ENCODE measurements at regions of chr1 and their contacts with region 1.

Region 1: GRCh38 chr1:60281360-60281932 is 207.9 kb upstream of the C1orf87 start:
- H3K4me3 ChIP-seq: no peak overlapping the region
- H3K27ac ChIP-seq: no peak overlapping the region
- H3K4me1 ChIP-seq: no peaks in the 10 kb centered on the region
- CTCF ChIP-seq: peak; percentile 57

Region 2: GRCh38 chr1:59971464-59971911 is 310.0 kb before region 1 on chr1:
- CTCF ChIA-PET with region 1: interaction called, 16 read pairs
- POLR2A ChIA-PET with region 1: no interaction called
- H3K4me3 ChIP-seq: no peak overlapping the region
- H3K27ac ChIP-seq: no peak overlapping the region
- H3K4me1 ChIP-seq: no peaks in the 10 kb centered on the region
- CTCF ChIP-seq: peak; percentile 89

Region 3: GRCh38 chr1:60073605-60074278 is 207.7 kb before region 1 on chr1 and contains the start of gene C1orf87:
- CTCF ChIA-PET with region 1: no interaction called
- POLR2A ChIA-PET with region 1: no interaction called
- H3K4me3 ChIP-seq: peak within 1 kb of the TSS; percentile 29
- H3K27ac ChIP-seq: no peak within 1 kb of the TSS
- H3K4me1 ChIP-seq: peaks cover 5% of the 10 kb centered on the region; the same call in 1 of the 2 replicates
- CTCF ChIP-seq: no peak

Region 4: DNA sequence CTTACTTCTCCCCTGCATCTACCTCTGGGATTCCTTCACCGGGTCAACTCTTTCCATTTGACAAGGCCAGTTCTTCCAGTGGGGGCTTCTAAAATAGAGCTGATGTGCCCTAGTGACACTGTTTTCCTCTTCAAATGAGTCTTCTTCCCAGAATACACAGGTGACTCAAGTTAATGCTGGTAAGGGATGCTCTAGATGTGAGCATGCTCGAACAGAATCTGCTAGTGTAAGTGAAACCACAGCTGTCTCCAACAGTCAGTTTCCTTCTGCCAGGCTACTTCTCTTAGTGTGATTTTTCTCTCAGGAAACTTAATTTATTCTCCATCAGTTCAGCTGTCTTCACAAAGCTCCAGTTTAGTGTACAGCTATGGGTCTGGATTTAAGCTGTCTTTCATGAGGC is 13.0 kb before region 1 on chr1:
- CTCF ChIA-PET with region 1: interaction called, 13 read pairs
- POLR2A ChIA-PET with region 1: interaction called, 3 read pairs
- H3K4me3 ChIP-seq: no peak overlapping the region
- H3K27ac ChIP-seq: no peak overlapping the region
- H3K4me1 ChIP-seq: no peaks in the 10 kb centered on the region
- CTCF ChIP-seq: no peak

Region 5: DNA sequence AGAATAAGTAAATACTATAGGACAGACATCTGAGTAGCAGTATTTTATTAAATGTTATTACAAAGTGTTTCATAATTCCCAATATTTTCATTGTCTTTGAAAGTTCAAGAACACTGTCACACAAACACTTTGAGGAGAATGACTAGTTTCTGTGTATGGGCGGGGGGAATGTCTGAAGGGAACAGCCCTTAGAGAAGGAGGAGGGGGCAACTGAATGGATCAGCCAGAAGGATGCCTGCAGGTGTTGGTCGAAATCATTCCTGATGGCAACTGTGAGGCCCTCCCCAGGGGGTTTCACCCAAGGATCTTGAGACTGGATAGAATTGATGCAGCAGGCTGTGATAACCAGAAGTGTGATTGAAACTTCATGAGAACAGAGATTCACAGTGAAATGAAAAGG is 15.3 kb after region 1 on chr1:
- CTCF ChIA-PET with region 1: interaction called, 13 read pairs
- POLR2A ChIA-PET with region 1: no interaction called
- H3K4me3 ChIP-seq: no peak overlapping the region
- H3K27ac ChIP-seq: no peak overlapping the region
- H3K4me1 ChIP-seq: no peaks in the 10 kb centered on the region
- CTCF ChIP-seq: no peak

Region 6: DNA sequence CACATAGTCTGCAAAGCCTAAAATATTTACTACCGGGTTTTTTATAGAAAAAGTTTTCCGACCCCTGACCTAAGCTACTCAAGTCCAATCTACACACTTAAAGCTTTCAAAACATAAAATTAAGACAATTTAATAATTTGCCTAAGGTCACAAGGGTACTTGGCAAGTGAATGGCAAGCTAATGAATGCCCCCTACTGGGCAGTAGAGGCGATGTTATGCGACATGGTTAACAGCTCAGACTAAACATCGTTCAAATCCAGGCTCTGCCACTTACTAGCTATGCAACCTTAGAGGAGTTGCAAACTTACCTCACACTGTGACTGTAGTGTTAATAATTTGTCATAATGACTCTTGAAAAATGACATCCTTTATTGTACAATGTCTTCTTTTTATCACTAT is 483.8 kb after region 1 on chr1:
- CTCF ChIA-PET with region 1: interaction called, 39 read pairs
- POLR2A ChIA-PET with region 1: interaction called, 5 read pairs
- H3K4me3 ChIP-seq: no peak overlapping the region
- H3K27ac ChIP-seq: no peak overlapping the region
- H3K4me1 ChIP-seq: no peaks in the 10 kb centered on the region
- CTCF ChIP-seq: no peak

Region 7: GRCh38 chr1:60848583-60849188 is 567.2 kb after region 1 on chr1:
- CTCF ChIA-PET with region 1: interaction called, 13 read pairs
- POLR2A ChIA-PET with region 1: no interaction called
- H3K4me3 ChIP-seq: no peak overlapping the region
- H3K27ac ChIP-seq: no peak overlapping the region
- H3K4me1 ChIP-seq: no peaks in the 10 kb centered on the region
- CTCF ChIP-seq: no peak